ENCODE measurements at regions of chr2 and their contacts with region 1.

Region 1: DNA sequence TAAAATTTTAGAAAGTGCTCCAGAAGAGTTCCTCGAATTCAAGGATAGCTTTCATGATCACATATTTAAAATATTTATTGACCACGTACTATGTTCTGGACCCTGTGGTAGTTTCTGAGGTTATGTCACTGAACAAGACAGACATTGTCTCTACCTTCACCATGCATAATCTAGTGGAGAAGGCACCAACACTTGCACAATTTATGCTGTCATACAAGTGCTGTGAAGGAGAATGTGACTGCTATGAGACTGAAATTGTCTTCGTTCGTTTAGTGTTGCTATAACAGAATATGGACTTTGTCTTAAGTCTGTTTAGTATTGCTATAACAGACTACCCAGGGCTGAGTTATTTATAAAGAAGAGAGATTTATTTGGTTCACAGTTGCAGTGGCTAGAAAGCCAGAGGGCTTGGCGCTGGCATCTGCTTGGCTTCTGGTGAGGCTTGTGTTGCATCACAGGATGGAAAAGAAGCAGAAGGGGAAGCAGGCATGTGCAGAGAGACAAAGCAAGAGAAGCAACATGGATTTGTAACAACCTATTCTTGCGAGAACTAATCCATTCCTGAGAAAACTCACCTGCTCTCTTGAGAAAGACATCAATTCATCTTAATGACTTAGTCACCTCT is 50.0 kb upstream of the RFX8 start:
- DNase-seq: peak in 1 of 14 experiments; percentile 15
- ATAC-seq: no peak
- H3K4me3 ChIP-seq: no peak overlapping the region
- H3K4me3 Mint-ChIP-seq: no peak overlapping the region
- H3K27ac ChIP-seq: no peak overlapping the region
- H3K27ac Mint-ChIP-seq: no peak overlapping the region
- H3K4me1 ChIP-seq: peaks cover 4% of the 10 kb centered on the region
- H3K4me1 Mint-ChIP-seq: no peaks in the 10 kb centered on the region
- H3K27me3 ChIP-seq: no peaks in the 10 kb centered on the region
- H3K27me3 Mint-ChIP-seq: no peaks in the 10 kb centered on the region
- CTCF ChIP-seq: no peak

Region 2: GRCh38 chr2:100935372-100935752 is 589.6 kb before region 1 on chr2:
- CTCF ChIA-PET with region 1: no interaction called
- POLR2A ChIA-PET with region 1: no interaction called
- intact Hi-C with region 1: no loop called
- DNase-seq: no peak
- ATAC-seq: no peak
- H3K4me3 ChIP-seq: no peak overlapping the region
- H3K4me3 Mint-ChIP-seq: no peak overlapping the region
- H3K27ac ChIP-seq: no peak overlapping the region
- H3K27ac Mint-ChIP-seq: no peak overlapping the region
- H3K4me1 ChIP-seq: no peaks in the 10 kb centered on the region
- H3K4me1 Mint-ChIP-seq: peaks cover 7% of the 10 kb centered on the region
- H3K27me3 ChIP-seq: no peaks in the 10 kb centered on the region
- H3K27me3 Mint-ChIP-seq: no peaks in the 10 kb centered on the region
- CTCF ChIP-seq: no peak

Region 3: DNA sequence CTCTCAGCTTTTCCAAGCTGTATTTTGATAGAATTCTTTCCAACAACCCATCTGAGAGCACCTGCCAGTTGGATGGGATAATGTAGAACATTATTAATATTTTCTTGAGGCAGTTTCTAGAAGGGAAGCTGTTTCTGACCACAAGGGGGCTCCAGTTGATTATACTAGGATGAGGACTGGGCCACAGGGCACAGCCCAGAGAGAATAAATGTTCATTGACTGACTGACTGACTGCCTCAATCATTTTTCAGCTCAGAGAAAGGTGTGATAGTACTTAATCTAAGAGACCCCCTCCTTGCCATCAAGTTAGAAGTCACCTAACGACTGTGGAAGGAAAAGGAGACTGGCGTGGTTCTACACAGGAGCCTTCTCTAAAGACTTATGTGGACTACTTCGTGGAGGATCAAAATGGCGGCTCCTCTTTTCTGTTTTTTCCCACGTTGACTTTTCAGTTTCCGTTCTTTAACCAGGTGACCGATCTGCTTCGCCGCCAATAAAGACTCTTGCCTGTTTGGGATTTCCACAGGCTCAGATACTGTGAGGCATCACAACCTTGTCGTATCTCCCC is 105.7 kb before region 1 on chr2:
- CTCF ChIA-PET with region 1: no interaction called
- POLR2A ChIA-PET with region 1: no interaction called
- intact Hi-C with region 1: no loop called
- DNase-seq: peak; percentile 18 to 83 (median 49)
- ATAC-seq: peak; percentile 76
- H3K4me3 ChIP-seq: no peak overlapping the region
- H3K4me3 Mint-ChIP-seq: no peak overlapping the region
- H3K27ac ChIP-seq: no peak overlapping the region
- H3K27ac Mint-ChIP-seq: no peak overlapping the region
- H3K4me1 ChIP-seq: no peaks in the 10 kb centered on the region
- H3K4me1 Mint-ChIP-seq: peaks cover 6% of the 10 kb centered on the region
- H3K27me3 ChIP-seq: no peaks in the 10 kb centered on the region
- H3K27me3 Mint-ChIP-seq: no peaks in the 10 kb centered on the region
- CTCF ChIP-seq: peak; percentile 74

Region 4: DNA sequence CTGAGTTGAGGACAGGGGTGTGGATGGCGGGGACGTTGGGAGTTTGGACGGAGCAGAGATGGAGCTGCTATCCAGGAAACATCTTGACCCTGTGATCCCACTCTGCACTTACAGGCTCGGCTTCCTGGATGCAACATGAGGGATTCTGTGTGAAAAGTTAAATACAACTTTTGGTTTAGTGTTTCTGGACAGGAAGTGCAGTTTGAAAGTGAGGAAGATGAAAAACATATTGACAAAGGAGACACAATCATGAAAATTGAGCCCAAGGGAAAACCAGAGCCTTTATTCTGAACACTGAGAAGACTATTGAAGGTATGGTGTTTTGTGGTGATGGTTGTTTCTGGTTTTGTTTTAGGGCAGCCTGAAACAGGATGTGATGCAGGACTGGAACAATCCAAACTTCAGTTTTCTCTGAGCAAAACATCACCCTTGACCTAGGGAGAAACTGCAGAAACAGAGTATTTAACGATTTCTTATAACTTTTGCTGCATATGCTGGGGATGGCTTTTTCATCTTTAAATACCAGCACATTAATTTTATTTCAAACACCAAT is 26.5 kb after region 1 on chr2:
- CTCF ChIA-PET with region 1: no interaction called
- POLR2A ChIA-PET with region 1: no interaction called
- intact Hi-C with region 1: no loop called
- DNase-seq: no peak
- ATAC-seq: no peak
- H3K4me3 ChIP-seq: no peak overlapping the region
- H3K4me3 Mint-ChIP-seq: no peak overlapping the region
- H3K27ac ChIP-seq: no peak overlapping the region
- H3K27ac Mint-ChIP-seq: no peak overlapping the region
- H3K4me1 ChIP-seq: peaks cover 11% of the 10 kb centered on the region
- H3K4me1 Mint-ChIP-seq: peaks cover 21% of the 10 kb centered on the region
- H3K27me3 ChIP-seq: no peaks in the 10 kb centered on the region
- H3K27me3 Mint-ChIP-seq: no peaks in the 10 kb centered on the region
- CTCF ChIP-seq: no peak

Region 5: DNA sequence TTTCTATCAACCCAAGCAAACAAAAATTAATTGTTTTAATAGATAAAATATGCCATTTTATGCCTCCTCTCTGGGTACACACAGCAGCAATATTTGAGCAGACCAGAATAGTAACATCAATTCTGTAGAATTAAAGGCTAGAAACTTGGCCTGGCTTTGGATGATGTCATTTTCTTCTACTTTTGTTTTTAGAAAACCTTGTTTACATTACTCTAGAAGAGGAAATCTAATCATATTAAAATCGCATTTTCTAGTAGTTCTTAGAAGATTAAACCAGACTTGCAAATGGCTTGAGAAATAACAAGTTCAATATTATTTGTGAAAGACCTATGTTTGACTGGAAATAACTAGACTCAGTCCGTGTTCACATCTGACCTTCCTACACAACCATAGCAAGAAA is 52.3 kb after region 1 on chr2:
- CTCF ChIA-PET with region 1: no interaction called
- POLR2A ChIA-PET with region 1: no interaction called
- intact Hi-C with region 1: no loop called
- DNase-seq: no peak
- ATAC-seq: no peak
- H3K4me3 ChIP-seq: no peak overlapping the region
- H3K4me3 Mint-ChIP-seq: no peak overlapping the region
- H3K27ac ChIP-seq: no peak overlapping the region
- H3K27ac Mint-ChIP-seq: no peak overlapping the region
- H3K4me1 ChIP-seq: no peaks in the 10 kb centered on the region
- H3K4me1 Mint-ChIP-seq: peaks cover 46% of the 10 kb centered on the region
- H3K27me3 ChIP-seq: no peaks in the 10 kb centered on the region
- H3K27me3 Mint-ChIP-seq: no peaks in the 10 kb centered on the region
- CTCF ChIP-seq: no peak

Region 6: DNA sequence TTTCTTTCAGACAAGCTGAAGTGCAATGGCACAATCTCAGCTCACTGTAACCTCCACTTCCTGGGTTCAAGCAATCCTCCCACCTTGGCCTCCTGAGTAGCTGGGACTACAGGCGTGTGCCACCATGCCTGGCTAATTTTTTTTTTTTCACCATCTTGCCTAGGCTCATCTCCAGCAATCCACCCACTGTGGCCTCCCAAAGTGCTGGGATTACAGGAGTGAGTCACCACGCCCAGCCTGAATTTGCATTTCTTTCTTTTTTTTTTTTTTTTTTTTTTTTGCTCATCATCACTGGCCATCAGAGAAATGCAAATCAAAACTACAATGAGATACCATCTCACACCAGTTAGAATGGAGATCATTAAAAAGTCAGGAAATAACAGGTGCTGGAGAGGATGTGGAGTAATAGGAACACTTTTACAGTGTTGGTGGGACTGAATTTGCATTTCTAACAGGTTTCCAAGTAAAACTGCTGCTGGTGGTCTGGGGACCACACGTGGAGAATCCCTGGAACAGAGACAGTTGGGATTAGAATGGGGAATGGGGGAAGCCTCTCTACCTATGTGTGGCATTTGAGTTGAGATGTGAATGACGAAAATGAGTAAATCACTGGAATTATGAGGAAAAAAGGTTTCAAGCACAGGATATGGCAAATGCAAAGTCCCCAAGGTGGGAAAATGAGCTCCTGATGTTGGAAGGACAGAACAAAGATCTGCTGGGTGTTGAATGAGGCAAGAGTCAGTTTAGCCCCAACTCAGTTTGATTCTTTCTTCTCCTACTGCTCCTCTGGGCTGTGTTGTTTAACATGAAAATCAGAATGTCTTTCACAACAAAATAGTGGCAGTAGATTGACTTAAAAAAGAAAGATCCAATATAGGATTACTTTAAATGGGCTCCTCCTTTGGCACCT is 83.7 kb after region 1 on chr2:
- CTCF ChIA-PET with region 1: no interaction called
- POLR2A ChIA-PET with region 1: no interaction called
- intact Hi-C with region 1: loop called in 1 of 2 experiments (anchors 5 kb)
- DNase-seq: no peak
- ATAC-seq: no peak
- H3K4me3 ChIP-seq: no peak overlapping the region
- H3K4me3 Mint-ChIP-seq: no peak overlapping the region
- H3K27ac ChIP-seq: no peak overlapping the region
- H3K27ac Mint-ChIP-seq: no peak overlapping the region
- H3K4me1 ChIP-seq: no peaks in the 10 kb centered on the region
- H3K4me1 Mint-ChIP-seq: no peaks in the 10 kb centered on the region
- H3K27me3 ChIP-seq: no peaks in the 10 kb centered on the region
- H3K27me3 Mint-ChIP-seq: no peaks in the 10 kb centered on the region
- CTCF ChIP-seq: no peak

Measured in CD4-positive, alpha-beta T cell (primary cell).